Breast epithelium (tissue), 4 donors: ENCODE measurements at regions of chr2 and their contacts with region 1.

Region 1: DNA sequence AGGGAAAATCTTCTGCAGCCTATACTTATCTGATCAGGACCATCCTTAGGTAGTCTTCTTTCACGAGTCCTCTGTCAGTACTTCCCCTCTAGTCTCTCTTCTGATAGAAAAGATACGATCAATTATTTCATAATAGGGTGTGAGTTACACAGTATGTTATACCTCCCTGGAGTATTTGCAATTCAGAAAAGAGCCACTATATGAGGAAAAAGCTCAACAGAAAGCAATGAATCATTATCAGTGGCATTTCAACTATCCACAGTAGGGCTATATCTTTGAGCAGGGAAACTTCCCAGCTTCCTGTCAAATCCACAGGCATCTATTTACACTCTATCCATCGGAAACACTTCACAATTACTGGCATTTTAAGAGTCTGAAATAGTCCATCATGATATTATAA is 105.3 kb upstream of the ACVR2A start:
- DNase-seq: no peak
- H3K4me3 ChIP-seq: no peak overlapping the region
- H3K27ac ChIP-seq: no peak overlapping the region
- H3K4me1 ChIP-seq: no peaks in the 10 kb centered on the region
- H3K27me3 ChIP-seq: no peaks in the 10 kb centered on the region
- CTCF ChIP-seq: no peak
- POLR2A ChIP-seq: no peak

Region 2: DNA sequence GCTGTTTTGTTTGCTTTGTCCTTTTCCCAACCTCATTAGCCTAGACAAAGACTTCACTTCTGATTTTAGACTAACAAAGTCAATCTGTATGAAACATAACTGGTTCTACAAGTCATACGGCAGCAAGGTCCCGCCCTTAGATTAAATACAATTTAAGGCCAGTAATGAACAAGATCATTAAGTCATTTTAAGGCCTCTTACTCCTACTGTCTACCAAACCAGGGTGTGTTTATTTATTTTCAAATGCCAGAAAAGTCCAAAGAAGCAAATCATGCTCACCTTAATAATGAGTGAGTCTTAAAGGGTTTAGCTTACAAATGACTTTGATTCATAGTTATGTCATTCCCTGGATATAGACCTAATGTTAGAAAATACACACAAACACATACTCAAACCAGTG is 43.1 kb before region 1 on chr2:
- intact Hi-C with region 1: loop called (anchors 2 kb)
- DNase-seq: no peak
- H3K4me3 ChIP-seq: no peak overlapping the region
- H3K27ac ChIP-seq: no peak overlapping the region
- H3K4me1 ChIP-seq: no peaks in the 10 kb centered on the region
- H3K27me3 ChIP-seq: no peaks in the 10 kb centered on the region
- CTCF ChIP-seq: no peak
- POLR2A ChIP-seq: no peak